Mammary epithelial cell (primary cell): ENCODE measurements at regions of chr3 and their contacts with region 1.

Region 1: DNA sequence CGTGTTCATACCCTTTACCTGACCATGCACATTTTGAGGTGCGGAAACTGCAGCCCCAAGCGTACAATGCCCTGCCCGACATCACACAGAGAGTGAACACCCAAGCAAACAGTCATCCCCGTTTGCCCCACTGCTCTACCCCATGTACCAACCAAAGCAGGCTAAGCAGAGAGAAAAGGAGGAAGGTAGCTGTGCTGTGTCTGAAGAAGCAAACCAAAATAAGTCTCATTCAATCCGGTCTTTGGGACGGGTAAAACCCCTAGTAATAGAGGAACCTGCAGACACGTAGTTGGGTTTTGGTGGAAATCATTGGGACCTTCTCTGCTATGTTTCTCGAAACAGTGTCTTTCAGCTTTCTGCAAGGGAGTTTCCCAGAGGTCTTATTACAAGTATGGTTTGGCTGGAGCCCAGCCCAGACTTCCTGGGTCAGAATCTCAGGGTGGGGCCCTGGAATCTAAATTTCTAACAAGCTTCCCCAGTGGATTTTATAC is 164.6 kb upstream of the HES1 start:
- DNase-seq: peak; percentile 76
- H3K4me3 ChIP-seq: no peak overlapping the region
- H3K27ac ChIP-seq: no peak overlapping the region
- H3K4me1 ChIP-seq: peaks cover 26% of the 10 kb centered on the region
- H3K27me3 ChIP-seq: no peaks in the 10 kb centered on the region
- CTCF ChIP-seq: no peak

Region 2: DNA sequence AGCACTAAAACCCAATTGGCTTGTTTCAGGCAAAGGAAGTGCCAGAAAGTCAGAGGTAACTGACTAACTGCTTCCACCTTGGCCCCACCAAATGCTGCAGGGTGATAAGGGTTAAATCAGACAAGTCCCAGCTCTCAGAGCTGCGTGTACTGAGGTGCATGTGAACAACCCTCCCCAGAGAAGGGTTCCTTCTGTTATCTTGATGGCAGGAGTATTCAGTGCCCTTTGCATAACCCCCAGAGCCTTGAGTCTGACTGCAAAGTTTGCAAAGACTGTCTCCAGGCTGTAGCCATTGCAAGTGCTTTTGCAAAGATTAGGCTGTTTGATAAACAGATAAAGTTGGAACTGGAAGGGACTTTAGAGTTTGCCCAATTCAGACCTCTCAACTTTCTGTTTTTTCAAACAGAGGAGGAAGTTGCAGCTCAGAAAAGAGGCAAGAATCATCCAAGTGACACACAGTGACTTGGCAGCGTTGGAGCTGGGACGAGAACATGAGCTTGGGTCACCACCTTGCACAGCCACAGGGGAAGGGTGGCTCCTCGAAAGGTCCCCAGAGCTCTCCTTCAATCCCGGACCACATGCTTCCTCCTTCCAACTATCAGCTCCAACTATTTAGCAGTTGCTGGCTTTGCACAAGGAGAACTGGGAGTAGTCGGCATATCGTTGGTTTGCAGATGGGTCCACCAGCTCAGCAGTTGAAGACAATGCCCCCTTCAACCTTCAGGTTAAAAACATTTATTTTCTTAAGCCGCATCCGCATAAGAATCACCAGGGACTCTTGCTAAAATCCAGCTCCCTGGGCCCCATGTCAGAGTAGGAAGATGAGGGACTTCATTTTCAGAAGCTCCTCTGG is 60.2 kb before region 1 on chr3:
- CTCF ChIA-PET with region 1: no interaction called
- dilution Hi-C with region 1: loop called (anchors 5 kb)
- in situ Hi-C with region 1: no loop called
- intact Hi-C with region 1: no loop called
- DNase-seq: no peak
- H3K4me3 ChIP-seq: no peak overlapping the region
- H3K27ac ChIP-seq: no peak overlapping the region
- H3K4me1 ChIP-seq: no peaks in the 10 kb centered on the region
- H3K27me3 ChIP-seq: no peaks in the 10 kb centered on the region
- CTCF ChIP-seq: no peak

Region 3: GRCh38 chr3:194030369-194030768 is 59.1 kb after region 1 on chr3:
- CTCF ChIA-PET with region 1: no interaction called
- dilution Hi-C with region 1: no loop called
- in situ Hi-C with region 1: no loop called
- intact Hi-C with region 1: no loop called
- DNase-seq: peak; percentile 17
- H3K4me3 ChIP-seq: no peak overlapping the region
- H3K27ac ChIP-seq: no peak overlapping the region
- H3K4me1 ChIP-seq: peaks cover 4% of the 10 kb centered on the region
- H3K27me3 ChIP-seq: no peaks in the 10 kb centered on the region
- CTCF ChIP-seq: no peak

Region 4: DNA sequence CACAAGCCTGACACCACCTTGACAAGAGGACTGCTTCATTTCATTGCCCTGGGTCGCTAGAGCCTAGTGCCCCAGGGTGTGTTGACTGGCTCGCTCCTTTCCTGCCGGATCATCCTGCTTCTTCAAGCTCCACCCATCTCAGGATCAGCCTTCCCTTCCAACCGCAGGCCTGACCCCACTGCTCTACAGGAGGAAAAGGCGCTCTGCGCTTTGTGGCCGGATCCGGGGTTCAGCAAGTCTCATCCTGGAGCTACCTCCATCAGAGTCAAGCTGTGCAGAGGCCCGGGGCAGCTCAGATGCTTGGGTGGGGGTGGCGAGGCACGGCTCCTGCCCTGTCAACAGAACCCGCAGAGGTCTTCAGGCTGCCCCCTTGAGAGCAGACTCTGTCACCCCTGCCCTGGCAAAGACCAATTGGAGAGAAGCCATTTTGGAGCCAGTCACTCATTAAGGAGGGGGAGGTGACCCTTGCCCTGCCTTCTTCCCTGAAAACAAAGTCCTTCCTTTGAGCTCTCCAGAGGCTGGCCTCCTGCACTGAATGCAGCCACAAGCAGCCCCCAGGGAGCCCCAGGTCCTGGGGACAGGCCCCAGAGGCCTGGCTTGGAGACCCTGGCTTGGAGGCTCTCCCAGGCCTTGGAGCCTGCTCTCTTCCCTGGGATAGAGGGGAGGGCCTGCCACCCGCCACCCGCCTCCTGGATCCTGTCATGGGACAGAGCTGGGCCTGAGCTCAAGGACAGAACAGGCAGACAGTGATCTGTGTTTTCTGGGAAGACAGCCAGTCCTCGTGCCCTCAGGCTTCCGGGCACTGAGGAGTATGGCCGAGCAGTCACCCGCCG is 299.5 kb after region 1 on chr3:
- CTCF ChIA-PET with region 1: no interaction called
- dilution Hi-C with region 1: no loop called
- in situ Hi-C with region 1: no loop called
- intact Hi-C with region 1: no loop called
- DNase-seq: peak; percentile 35
- H3K4me3 ChIP-seq: no peak overlapping the region
- H3K27ac ChIP-seq: no peak overlapping the region
- H3K4me1 ChIP-seq: peaks cover 13% of the 10 kb centered on the region
- H3K27me3 ChIP-seq: no peaks in the 10 kb centered on the region
- CTCF ChIP-seq: no peak